ENCODE measurements at regions of chr10 and their contacts with region 1.

Region 1: DNA sequence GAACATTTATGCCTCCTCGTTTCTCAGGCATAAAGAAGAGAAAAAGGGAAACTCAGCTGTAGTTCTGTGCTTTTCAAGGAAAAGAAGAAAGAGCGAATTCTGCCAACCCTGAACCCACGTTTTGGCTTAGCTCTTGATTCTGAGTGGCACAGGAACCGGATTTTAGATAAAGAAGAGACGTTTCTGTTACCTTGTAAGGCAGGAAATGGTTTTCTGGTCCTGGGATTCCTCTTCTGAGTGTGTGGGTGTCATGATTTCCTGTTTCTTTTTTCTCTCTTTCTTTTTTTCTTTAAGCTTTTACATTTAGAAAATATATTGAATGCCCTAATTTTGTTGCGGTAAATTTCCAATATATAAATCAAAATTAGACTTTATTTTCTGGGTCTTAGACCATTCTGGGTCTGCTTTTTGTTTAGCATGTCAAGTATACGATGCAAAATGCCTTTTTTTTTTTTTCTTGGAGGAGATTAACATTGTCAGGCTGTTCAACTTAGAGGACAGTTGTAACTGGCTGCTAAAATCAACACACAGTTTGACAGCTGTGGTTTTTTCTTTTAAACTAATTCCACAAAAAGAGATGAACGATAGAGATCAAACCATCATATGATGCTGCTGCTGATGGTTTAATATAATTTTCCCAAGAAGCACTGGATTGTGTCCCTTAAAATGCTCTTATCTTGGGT is 190.8 kb downstream of the GATA3 start:
- DNase-seq: peak; percentile 30
- H3K4me3 Mint-ChIP-seq: no peak overlapping the region
- H3K27ac Mint-ChIP-seq: peak overlapping the region; percentile 37
- H3K4me1 Mint-ChIP-seq: peaks cover 38% of the 10 kb centered on the region
- H3K27me3 Mint-ChIP-seq: no peaks in the 10 kb centered on the region

Region 2: GRCh38 chr10:8183241-8183704 is 62.0 kb before region 1 on chr10:
- CTCF ChIA-PET with region 1: no interaction called
- intact Hi-C with region 1: loop called (anchors 2 kb)
- DNase-seq: peak; percentile 51
- H3K4me3 Mint-ChIP-seq: no peak overlapping the region
- H3K27ac Mint-ChIP-seq: peak overlapping the region; percentile 21
- H3K4me1 Mint-ChIP-seq: peaks cover 16% of the 10 kb centered on the region
- H3K27me3 Mint-ChIP-seq: no peaks in the 10 kb centered on the region

Region 3: DNA sequence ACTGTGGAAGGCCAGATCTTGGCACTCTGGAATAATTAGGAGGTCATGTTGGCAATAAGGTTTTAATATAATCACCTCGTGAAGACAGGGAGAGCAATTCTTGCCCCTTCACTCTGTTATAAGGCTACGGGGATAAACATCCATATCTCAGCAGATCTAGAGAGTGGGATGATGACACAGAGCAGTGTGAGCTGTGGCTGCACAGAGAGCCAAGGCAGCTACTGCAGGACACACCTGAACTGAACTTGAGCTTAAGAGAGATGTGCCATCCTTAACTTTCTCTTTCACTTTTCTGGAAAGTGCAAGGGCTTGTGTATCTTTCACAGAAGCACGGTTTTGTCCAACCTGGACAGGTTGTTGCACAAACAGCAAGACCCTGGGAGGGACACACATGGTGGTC is 16.1 kb before region 1 on chr10:
- CTCF ChIA-PET with region 1: no interaction called
- intact Hi-C with region 1: no loop called
- DNase-seq: no peak
- H3K4me3 Mint-ChIP-seq: no peak overlapping the region
- H3K27ac Mint-ChIP-seq: no peak overlapping the region
- H3K4me1 Mint-ChIP-seq: peaks cover 25% of the 10 kb centered on the region
- H3K27me3 Mint-ChIP-seq: no peaks in the 10 kb centered on the region

Measured in activated naive CD4-positive, alpha-beta T cell treated with anti-CD3 and anti-CD28 coated beads for 36 hours (primary cell).